ENCODE measurements at regions of chr6 and their contacts with region 1.

Region 1: DNA sequence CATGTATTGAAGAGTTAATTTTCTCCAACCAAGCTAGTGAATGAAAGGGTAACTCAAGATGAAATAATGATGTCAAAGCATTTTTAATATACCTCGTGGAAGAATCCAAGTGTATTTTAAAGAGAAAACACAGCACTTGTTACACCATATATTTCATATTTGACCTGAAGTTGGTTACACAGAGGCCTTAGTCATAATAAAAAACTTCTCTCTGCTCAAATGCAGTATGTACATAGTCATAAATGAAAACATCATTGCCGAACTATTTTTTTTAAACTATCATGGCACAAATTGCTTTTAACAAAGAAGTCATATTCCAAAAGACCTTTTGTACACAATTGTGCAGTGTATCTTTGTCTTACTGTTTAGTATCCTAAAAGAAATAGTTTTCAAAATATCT is 43.0 kb downstream of the BACH2 start:
- DNase-seq: no peak
- H3K4me3 ChIP-seq: no peak overlapping the region
- H3K27ac ChIP-seq: no peak overlapping the region
- H3K4me1 ChIP-seq: no peaks in the 10 kb centered on the region
- H3K27me3 ChIP-seq: no peaks in the 10 kb centered on the region
- CTCF ChIP-seq: no peak
- POLR2A ChIP-seq: no peak

Region 2: DNA sequence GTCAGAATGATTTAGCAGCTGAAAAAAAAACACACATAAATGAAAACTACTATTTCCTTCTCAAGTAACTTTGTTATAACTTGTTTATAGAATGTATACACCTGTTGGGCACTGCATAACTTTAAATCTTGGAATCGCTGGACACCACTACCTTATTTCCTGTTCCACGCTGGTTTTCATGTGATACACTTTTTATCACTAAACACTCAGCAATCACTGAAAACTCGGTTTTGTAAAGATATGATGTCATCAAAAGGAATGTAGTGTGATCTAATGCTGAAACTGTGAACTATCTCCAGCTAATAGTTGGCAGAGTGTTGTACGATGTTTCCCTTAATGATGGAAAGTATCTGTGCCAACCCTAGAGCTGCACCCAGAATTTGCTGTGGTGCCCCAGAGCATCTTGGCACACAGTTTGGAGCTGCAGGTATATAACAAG is 84.9 kb before region 1 on chr6:
- intact Hi-C with region 1: no loop called
- DNase-seq: no peak
- H3K4me3 ChIP-seq: no peak overlapping the region
- H3K27ac ChIP-seq: no peak overlapping the region
- H3K4me1 ChIP-seq: no peaks in the 10 kb centered on the region
- H3K27me3 ChIP-seq: no peaks in the 10 kb centered on the region
- CTCF ChIP-seq: no peak
- POLR2A ChIP-seq: no peak

Region 3: GRCh38 chr6:90194371-90194841 is 59.2 kb before region 1 on chr6:
- intact Hi-C with region 1: loop called (anchors 2 kb)
- DNase-seq: no peak
- H3K4me3 ChIP-seq: no peak overlapping the region
- H3K27ac ChIP-seq: no peak overlapping the region
- H3K4me1 ChIP-seq: no peaks in the 10 kb centered on the region
- H3K27me3 ChIP-seq: no peaks in the 10 kb centered on the region
- CTCF ChIP-seq: no peak
- POLR2A ChIP-seq: no peak

Measured in breast epithelium (tissue), 4 donors.